Activated CD4-positive, alpha-beta T cell treated with anti-CD3 and anti-CD28 coated beads, Interleukin-2, amount 10 ng/mL, durations not matched to agents 24 days and 14 days (primary cell): ENCODE measurements at regions of chr3 and their contacts with region 1.

Region 1: GRCh38 chr3:125585595-125586223 is 9.6 kb downstream of the OSBPL11 start:
- DNase-seq: peak; percentile 83
- H3K4me3 Mint-ChIP-seq: no peak overlapping the region
- H3K27ac Mint-ChIP-seq: no peak overlapping the region
- H3K4me1 Mint-ChIP-seq: peaks cover 9% of the 10 kb centered on the region
- H3K27me3 Mint-ChIP-seq: no peaks in the 10 kb centered on the region

Region 2: GRCh38 chr3:124928333-124929202 is 657.1 kb before region 1 on chr3:
- intact Hi-C with region 1: loop called (anchors 1 kb)
- DNase-seq: peak; percentile 87
- H3K4me3 Mint-ChIP-seq: no peak overlapping the region
- H3K27ac Mint-ChIP-seq: no peak overlapping the region
- H3K4me1 Mint-ChIP-seq: peaks cover 6% of the 10 kb centered on the region
- H3K27me3 Mint-ChIP-seq: peaks cover 44% of the 10 kb centered on the region

Region 3: GRCh38 chr3:124995460-124995994 is 590.2 kb before region 1 on chr3:
- intact Hi-C with region 1: loop called (anchors 5 kb)
- DNase-seq: peak; percentile 87
- H3K4me3 Mint-ChIP-seq: no peak overlapping the region
- H3K27ac Mint-ChIP-seq: no peak overlapping the region
- H3K4me1 Mint-ChIP-seq: peaks cover 13% of the 10 kb centered on the region
- H3K27me3 Mint-ChIP-seq: no peaks in the 10 kb centered on the region

Region 4: GRCh38 chr3:125150525-125151441 is 434.9 kb before region 1 on chr3:
- intact Hi-C with region 1: loop called (anchors 5 kb)
- DNase-seq: peak; percentile 90
- H3K4me3 Mint-ChIP-seq: no peak overlapping the region
- H3K27ac Mint-ChIP-seq: no peak overlapping the region
- H3K4me1 Mint-ChIP-seq: peaks cover 18% of the 10 kb centered on the region
- H3K27me3 Mint-ChIP-seq: peaks cover 36% of the 10 kb centered on the region

Region 5: GRCh38 chr3:125257536-125257935 is 328.2 kb before region 1 on chr3:
- intact Hi-C with region 1: no loop called
- DNase-seq: no peak
- H3K4me3 Mint-ChIP-seq: no peak overlapping the region
- H3K27ac Mint-ChIP-seq: no peak overlapping the region
- H3K4me1 Mint-ChIP-seq: peaks cover 3% of the 10 kb centered on the region
- H3K27me3 Mint-ChIP-seq: no peaks in the 10 kb centered on the region

Region 6: GRCh38 chr3:125437631-125438435 is 147.9 kb before region 1 on chr3:
- intact Hi-C with region 1: loop called (anchors 5 kb)
- DNase-seq: peak; percentile 90
- H3K4me3 Mint-ChIP-seq: no peak overlapping the region
- H3K27ac Mint-ChIP-seq: no peak overlapping the region
- H3K4me1 Mint-ChIP-seq: no peaks in the 10 kb centered on the region
- H3K27me3 Mint-ChIP-seq: peaks cover 5% of the 10 kb centered on the region

Region 7: GRCh38 chr3:125602752-125603649 is 17.3 kb after region 1 on chr3:
- intact Hi-C with region 1: no loop called
- DNase-seq: no peak
- H3K4me3 Mint-ChIP-seq: no peak overlapping the region
- H3K27ac Mint-ChIP-seq: no peak overlapping the region
- H3K4me1 Mint-ChIP-seq: peaks cover 2% of the 10 kb centered on the region
- H3K27me3 Mint-ChIP-seq: peaks cover 5% of the 10 kb centered on the region